OCI-LY7 (cell line): ENCODE measurements at regions of chr6 and their contacts with region 1.

Region 1: DNA sequence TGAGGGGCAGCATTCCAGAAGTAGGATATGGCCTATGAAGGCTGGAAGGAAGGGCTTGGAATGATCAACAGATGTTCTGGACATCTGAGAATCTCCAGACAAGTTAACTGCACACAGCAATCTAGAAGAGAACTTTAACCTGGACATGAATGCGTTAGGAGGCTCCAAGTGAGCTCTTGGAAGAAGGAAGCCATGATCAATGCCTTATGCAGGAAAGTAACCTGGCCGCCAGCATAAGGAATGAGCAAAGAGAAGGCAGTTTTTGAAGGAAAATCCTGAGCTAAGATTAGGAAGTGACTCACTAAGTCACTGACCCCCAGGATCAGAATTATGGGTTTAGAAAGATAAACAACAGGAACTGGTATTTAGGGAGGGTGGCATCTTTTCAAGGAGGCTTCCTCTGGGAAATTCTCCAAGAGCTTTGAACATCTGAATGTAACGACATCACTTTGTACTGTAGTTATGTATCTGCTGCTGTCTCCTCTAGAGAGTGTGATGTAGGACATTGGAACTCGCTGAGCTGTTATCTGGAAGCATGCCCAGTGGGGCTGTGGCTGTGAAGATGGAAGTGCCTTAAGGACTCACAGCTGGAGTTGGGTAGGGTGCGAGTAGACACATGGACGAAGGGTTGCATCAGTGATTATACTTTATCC is 236.8 kb downstream of the PACRG start:
- DNase-seq: no peak
- H3K4me3 ChIP-seq: no peak overlapping the region
- H3K27ac ChIP-seq: no peak overlapping the region
- H3K4me1 ChIP-seq: no peaks in the 10 kb centered on the region
- CTCF ChIP-seq: no peak

Region 2: DNA sequence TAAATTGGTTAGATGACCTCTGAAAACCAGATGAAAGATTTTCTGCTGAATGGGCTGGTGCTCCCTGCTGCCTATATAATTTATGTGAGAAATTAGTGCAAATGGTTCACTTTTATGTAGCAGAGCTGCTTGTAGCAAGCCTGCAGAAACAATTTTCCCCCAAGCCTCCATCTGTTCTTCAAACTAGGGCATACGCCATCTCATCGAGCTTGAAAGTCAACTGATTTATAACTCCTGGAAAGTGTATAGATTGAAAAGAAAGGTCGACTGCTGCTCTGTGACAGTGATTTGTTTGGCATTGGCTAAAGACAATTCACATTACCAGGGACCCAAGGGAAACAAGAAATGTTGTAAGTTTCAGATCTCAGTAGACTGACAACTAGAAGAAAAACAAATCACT is 143.5 kb before region 1 on chr6:
- CTCF ChIA-PET with region 1: no interaction called
- POLR2A ChIA-PET with region 1: no interaction called
- intact Hi-C with region 1: loop called (anchors 5 kb)
- DNase-seq: no peak
- H3K4me3 ChIP-seq: no peak overlapping the region
- H3K27ac ChIP-seq: no peak overlapping the region
- H3K4me1 ChIP-seq: no peaks in the 10 kb centered on the region
- CTCF ChIP-seq: no peak

Region 3: DNA sequence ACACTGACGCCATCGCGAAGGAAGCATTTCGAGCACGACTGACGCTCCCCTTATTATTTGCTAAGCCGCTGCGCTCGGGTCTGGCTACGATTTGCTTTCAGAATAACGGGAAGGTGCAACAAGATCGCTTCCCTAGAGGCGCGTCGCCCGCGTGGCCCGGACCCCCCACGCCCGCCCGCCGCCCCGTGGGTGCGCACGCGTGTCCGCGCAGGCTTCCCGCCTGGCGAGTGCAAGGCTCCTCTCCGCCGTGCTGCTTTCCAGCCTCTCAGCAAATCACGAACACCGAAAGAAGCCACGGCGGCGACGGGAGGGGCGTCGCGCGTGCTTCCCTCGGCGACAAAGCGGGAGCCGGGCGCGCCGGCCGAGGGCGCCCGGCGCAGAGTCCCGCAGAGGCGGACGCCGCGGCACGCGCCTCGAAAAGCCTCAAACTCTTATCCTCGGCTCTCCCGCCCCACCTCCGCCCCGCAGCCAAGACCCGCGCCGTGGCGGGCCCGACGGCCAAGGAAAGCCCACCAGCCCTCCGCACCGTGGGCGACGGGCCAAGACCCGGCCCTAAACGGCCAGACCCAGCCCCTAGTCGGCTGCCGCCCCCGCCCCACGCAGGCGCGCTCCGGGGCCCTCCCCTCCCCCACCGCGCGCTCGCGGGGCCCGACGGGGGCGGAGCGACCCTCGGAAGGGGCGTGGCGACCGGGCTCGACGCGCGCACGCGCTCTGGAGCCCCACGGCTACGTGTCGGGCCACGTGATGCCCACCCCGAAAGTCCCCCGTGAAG is 448.9 kb after region 1 on chr6:
- CTCF ChIA-PET with region 1: no interaction called
- POLR2A ChIA-PET with region 1: no interaction called
- intact Hi-C with region 1: no loop called
- DNase-seq: peak; percentile 90
- H3K4me3 ChIP-seq: peak overlapping the region; percentile 72
- H3K27ac ChIP-seq: peak overlapping the region; percentile 74
- H3K4me1 ChIP-seq: peaks cover 18% of the 10 kb centered on the region
- CTCF ChIP-seq: no peak